WTC11 (cell line): ENCODE measurements at regions of chr2 and their contacts with region 1.

Region 1: DNA sequence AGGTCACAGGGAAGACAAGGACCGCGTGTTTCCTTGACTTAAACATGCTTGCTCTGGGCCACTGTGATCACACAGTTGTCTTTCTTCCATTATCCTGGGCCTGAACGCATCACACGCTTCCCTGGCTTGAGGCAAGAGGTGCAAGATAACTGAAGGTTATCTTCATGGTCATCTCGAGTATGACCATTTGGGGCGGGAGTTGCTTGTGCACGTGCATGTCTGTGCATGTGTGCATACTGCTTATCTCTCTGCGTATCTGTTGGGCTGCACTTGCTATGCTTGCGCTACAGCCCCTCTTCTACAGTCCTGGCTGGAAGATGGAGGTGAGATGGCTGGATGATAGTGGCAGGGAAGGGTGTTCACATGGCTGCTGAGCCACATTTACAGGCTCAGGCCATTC is 27.3 kb upstream of the EFR3B start:
- DNase-seq: no peak
- ATAC-seq: no peak
- H3K4me3 Mint-ChIP-seq: no peak overlapping the region
- H3K27ac Mint-ChIP-seq: no peak overlapping the region
- H3K4me1 Mint-ChIP-seq: peaks cover 7% of the 10 kb centered on the region
- H3K27me3 Mint-ChIP-seq: no peaks in the 10 kb centered on the region
- CTCF ChIP-seq: no peak

Region 2: GRCh38 chr2:25000503-25001324 is 13.9 kb before region 1 on chr2:
- CTCF ChIA-PET with region 1: no interaction called
- POLR2A ChIA-PET with region 1: interaction called, 15 read pairs
- DNase-seq: no peak
- ATAC-seq: no peak
- H3K4me3 Mint-ChIP-seq: no peak overlapping the region
- H3K27ac Mint-ChIP-seq: no peak overlapping the region
- H3K4me1 Mint-ChIP-seq: no peaks in the 10 kb centered on the region
- H3K27me3 Mint-ChIP-seq: no peaks in the 10 kb centered on the region
- CTCF ChIP-seq: no peak

Region 3: GRCh38 chr2:25602333-25602723 is 587.7 kb after region 1 on chr2:
- CTCF ChIA-PET with region 1: no interaction called
- POLR2A ChIA-PET with region 1: no interaction called
- DNase-seq: no peak
- ATAC-seq: no peak
- H3K4me3 Mint-ChIP-seq: no peak overlapping the region
- H3K27ac Mint-ChIP-seq: no peak overlapping the region
- H3K4me1 Mint-ChIP-seq: no peaks in the 10 kb centered on the region; the same call in 1 of the 2 replicates
- H3K27me3 Mint-ChIP-seq: no peaks in the 10 kb centered on the region
- CTCF ChIP-seq: no peak